ENCODE measurements at regions of chr7 and their contacts with region 1.

Region 1: DNA sequence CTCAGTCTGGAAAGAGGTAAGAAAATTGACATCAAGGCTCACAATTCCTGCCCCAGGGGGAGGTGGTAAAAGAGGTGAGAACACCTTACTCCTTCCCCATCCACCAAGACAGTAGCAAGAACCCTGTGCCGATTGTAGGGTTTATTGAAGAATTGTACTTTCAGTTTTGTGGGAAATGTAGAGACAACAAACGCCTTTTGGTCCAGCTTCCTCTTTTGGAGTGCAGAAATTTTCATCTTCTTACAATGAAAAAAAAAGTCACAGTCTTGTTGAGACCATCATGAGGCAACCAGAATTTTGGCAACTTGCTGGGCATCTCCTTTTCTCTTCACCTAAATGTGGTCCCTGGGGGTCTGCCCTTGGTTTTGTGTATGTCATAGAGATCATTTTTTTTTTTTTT is 217.7 kb downstream of the TMEM178B start:
- DNase-seq: no peak
- H3K4me3 ChIP-seq: peak overlapping the region in 5 of 59 donors; percentile 0 to 6 (median 1)
- H3K27ac ChIP-seq: peak overlapping the region in 18 of 59 donors; percentile 4 to 65 (median 40)
- H3K27me3 ChIP-seq: no peaks in the 10 kb centered on the region
- CTCF ChIP-seq: no peak

Region 2: GRCh38 chr7:141402277-141402996 is 110.9 kb after region 1 on chr7:
- intact Hi-C with region 1: no loop called
- DNase-seq: peak in 4 of 10 donors; percentile 43 to 54 (median 48)
- H3K4me3 ChIP-seq: no peak overlapping the region
- H3K27ac ChIP-seq: peak overlapping the region in 20 of 59 donors; percentile 0 to 64 (median 34)
- H3K27me3 ChIP-seq: no peaks in the 10 kb centered on the region
- CTCF ChIP-seq: no peak

Region 3: DNA sequence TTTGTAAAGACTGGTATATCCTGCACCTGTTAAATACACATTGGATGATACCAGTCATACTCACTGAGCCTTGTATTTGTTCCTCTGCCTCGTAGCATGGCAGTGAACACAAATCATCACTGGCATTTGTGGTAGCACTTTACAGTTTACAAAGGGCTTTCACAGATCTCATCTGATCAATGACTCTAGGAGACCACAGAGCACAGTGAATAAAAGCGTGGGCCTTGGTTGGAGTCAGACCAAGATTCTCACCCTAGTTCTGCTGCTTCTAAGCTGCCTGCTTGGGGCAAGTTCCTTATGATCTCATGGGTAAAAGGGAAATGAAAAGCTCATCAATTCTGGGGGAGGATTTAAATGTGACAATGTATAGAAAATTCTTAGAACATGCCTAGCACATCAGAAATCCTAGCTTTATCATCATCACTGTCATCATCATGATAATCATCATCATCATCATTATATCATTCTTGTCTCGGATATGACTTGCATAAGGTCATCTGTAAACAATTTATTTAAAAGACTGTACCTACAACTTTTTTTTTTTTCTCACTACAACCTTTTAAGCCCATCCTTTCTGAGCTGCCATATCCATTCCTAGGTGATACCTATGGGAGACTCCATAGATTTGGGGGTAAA is 129.9 kb after region 1 on chr7:
- intact Hi-C with region 1: loop called in 1 of 2 experiments (anchors 10 kb)
- DNase-seq: no peak
- H3K4me3 ChIP-seq: no peak overlapping the region
- H3K27ac ChIP-seq: no peak overlapping the region
- H3K27me3 ChIP-seq: no peaks in the 10 kb centered on the region
- CTCF ChIP-seq: no peak

Measured in dorsolateral prefrontal cortex (tissue), 120 donors.